GM23248 (cell line): ENCODE measurements at regions of chr15 and their contacts with region 1.

Region 1: DNA sequence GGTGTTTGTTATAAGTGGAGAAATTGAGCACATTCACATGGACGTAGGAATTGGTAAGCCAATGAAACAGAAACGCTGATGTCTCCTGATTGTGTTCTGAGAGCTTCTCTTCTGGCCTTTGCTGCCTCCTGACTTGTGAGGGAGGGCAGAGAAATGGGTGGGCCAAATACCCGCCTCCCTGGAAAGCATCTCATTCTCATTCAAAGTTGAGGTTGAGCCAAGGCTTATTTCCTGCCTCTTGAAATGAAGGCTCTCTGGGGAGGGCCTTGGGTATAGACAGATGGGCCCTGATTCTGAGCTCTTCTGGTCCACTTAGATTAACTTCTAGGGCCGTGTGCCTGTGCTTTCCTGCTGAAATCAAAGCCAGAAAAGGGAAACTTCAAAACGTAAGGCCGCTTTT is 57.4 kb upstream of the MYZAP start:
- DNase-seq: no peak
- H3K4me3 ChIP-seq: no peak overlapping the region
- H3K27ac ChIP-seq: no peak overlapping the region
- H3K4me1 ChIP-seq: peaks cover 14% of the 10 kb centered on the region
- H3K27me3 ChIP-seq: no peaks in the 10 kb centered on the region

Region 2: DNA sequence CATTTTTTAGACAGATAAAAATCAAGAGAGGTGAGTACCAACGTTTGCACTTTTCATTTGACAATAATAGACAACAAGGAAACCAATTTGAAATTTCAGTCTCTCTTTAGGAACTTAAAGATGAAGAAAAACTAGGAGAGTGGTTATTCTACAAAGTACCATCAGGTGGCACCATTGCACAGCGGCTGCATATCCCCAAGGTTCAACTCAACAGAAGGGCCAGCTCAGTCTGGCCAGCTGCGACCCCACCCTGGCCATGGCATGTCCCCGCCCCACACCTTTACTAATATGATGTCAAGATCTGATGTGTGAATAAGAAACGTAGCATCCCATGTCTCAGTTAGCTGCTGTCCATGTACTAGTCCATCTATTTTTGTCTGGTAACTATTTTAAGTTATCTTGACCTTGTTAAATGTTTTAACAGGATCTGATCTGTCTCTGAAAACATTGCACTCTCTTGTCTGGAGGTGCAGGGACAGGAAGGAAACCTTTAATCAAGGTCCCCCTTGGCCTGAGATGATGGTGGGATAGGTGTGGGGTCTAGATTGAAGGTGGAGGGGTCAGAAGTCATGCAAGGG is 193.5 kb before region 1 on chr15:
- in situ Hi-C with region 1: loop called (anchors 5 kb)
- DNase-seq: peak; percentile 66
- H3K4me3 ChIP-seq: no peak overlapping the region
- H3K27ac ChIP-seq: no peak overlapping the region
- H3K4me1 ChIP-seq: no peaks in the 10 kb centered on the region
- H3K27me3 ChIP-seq: no peaks in the 10 kb centered on the region